Prostate gland (tissue), 2 donors: ENCODE measurements at regions of chr18 and their contacts with region 1.

Region 1: DNA sequence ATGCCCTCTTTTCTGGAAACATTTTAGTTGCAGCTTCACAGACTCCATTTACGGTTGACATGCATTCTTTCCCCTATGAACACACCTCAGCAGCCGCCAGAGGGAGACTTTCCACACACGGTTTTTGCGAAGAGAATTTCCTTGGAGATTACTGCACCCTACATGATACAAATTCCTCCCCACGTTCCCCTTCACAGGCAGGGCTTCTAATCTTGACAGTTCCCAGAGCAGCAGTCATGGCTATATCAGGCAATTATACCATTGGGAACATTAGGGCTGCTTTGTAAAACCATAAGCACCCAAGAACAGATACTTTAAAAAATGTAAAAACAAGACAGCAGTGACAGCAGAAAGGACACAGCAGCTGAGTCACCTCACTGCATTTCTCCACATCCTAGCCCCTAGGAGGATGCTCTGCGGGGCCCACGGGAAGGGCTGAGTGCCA is 253.8 kb downstream of the TGIF1 start:
- DNase-seq: peak; percentile 59
- H3K4me3 ChIP-seq: no peak overlapping the region
- H3K27ac ChIP-seq: no peak overlapping the region
- H3K4me1 ChIP-seq: no peaks in the 10 kb centered on the region
- H3K27me3 ChIP-seq: no peaks in the 10 kb centered on the region
- CTCF ChIP-seq: peak; percentile 23 to 69 (median 60)
- POLR2A ChIP-seq: no peak

Region 2: GRCh38 chr18:3782901-3783300 is 79.1 kb after region 1 on chr18:
- intact Hi-C with region 1: no loop called
- DNase-seq: no peak
- H3K4me3 ChIP-seq: no peak overlapping the region
- H3K27ac ChIP-seq: no peak overlapping the region
- H3K4me1 ChIP-seq: no peaks in the 10 kb centered on the region
- H3K27me3 ChIP-seq: no peaks in the 10 kb centered on the region
- CTCF ChIP-seq: no peak
- POLR2A ChIP-seq: no peak

Region 3: GRCh38 chr18:3869848-3870247 is 166.1 kb after region 1 on chr18:
- intact Hi-C with region 1: loop called (anchors 5 kb)
- DNase-seq: no peak
- H3K4me3 ChIP-seq: no peak overlapping the region
- H3K27ac ChIP-seq: no peak overlapping the region
- H3K4me1 ChIP-seq: no peaks in the 10 kb centered on the region
- H3K27me3 ChIP-seq: no peaks in the 10 kb centered on the region
- CTCF ChIP-seq: peak; percentile 15 to 63 (median 38)
- POLR2A ChIP-seq: no peak

Region 4: DNA sequence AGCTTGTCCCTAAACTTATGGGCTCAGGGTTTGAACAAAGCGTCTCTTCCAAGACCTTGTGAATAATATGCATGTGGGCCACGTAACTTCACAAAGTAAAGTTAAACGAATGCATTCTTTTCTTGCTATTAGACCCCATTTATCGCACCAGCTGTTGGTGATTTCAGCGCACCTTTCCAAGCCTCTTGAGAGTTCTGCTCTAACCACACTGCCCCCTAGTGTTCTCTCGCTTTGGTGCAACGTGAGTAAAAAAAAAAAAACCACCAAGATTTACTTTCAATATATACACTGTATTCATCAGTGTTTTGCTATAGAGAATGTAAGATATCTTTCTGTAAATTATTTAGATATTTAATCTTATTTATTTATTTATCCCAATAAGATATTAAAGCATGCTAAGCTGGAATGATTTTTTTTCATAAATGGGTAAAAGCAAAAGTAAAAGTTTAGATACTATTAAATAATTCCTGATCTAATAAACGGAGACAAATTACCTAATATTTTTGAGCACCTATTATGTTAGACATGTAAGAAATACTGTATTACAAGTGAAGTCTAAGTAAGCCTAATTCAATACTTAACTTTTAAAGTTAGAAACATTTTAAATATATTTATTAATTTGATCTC is 291.8 kb after region 1 on chr18:
- intact Hi-C with region 1: loop called (anchors 5 kb)
- DNase-seq: peak; percentile 44
- H3K4me3 ChIP-seq: no peak overlapping the region
- H3K27ac ChIP-seq: no peak overlapping the region
- H3K4me1 ChIP-seq: no peaks in the 10 kb centered on the region
- H3K27me3 ChIP-seq: no peaks in the 10 kb centered on the region
- CTCF ChIP-seq: peak; percentile 55 to 73 (median 60)
- POLR2A ChIP-seq: no peak

Region 5: DNA sequence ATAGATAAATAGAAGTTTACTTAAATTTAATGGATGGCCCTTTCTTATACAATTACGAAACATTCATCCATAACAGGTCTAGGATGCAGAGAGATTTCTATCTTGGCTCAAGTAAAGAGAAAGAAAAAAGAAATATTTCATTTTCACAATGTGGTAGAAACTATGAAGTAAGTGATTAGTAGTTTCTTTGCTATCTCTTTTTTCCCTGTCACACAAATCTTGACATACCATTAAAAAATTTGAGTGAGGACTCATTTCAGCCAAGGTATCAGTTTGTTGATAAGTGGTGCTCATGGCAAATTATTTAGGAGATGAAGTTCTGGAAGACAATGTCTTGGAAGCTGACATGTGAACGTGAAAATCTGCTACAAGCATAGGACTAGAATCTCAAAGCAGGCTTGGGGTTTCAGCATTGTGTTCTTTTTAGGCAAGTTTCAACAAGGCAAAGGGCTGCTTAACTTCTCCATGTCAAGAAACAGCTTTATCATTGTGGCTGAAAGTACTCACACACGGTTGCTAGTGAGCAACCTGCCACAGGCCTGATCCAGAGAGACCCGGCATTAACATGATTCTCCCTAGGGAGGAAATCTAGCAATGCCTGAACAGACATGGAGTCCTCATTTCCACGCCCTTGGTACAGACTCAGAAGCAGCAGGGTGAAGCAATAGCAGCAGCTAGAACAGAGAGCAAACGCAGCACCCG is 336.8 kb after region 1 on chr18:
- intact Hi-C with region 1: no loop called
- DNase-seq: no peak
- H3K4me3 ChIP-seq: no peak overlapping the region
- H3K27ac ChIP-seq: no peak overlapping the region
- H3K4me1 ChIP-seq: no peaks in the 10 kb centered on the region
- H3K27me3 ChIP-seq: no peaks in the 10 kb centered on the region
- CTCF ChIP-seq: no peak
- POLR2A ChIP-seq: no peak